MCF 10A (cell line): ENCODE measurements at regions of chr5 and their contacts with region 1.

Region 1: DNA sequence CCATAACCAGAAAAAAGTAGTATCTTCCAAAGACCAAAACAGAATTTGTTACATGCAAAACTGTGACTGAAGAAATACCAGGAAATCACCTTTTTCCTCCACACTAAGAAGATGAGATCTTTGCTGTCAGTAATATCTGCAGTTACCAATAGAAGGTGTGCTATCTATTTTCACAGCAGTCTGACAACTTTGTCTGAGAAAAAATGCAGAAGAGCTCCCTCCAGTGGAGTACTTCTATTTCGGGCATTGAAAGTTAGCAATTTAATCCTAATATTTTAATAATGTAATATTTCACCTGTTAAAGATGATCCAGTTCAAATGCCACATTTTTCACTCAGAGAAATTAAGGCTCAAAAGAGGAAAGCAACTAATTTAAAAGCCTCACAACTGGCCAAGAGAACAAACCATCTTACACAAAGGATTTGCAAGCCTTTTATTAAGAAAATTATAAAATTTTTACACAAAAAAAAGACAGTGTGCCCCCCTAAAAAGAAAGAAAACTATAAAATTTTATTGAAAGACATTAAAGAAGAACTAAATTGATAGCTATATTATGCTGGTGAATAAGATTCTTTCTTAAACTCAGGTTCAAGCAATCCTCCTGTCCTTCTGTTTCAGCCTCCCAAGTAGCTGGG is 50.6 kb downstream of the DEPDC1B start:
- DNase-seq: peak; percentile 63
- H3K4me3 Mint-ChIP-seq: no peak overlapping the region
- H3K27ac Mint-ChIP-seq: no peak overlapping the region
- H3K4me1 Mint-ChIP-seq: peaks cover 22% of the 10 kb centered on the region
- H3K27me3 Mint-ChIP-seq: no peaks in the 10 kb centered on the region
- CTCF ChIP-seq: peak; percentile 49

Region 2: GRCh38 chr5:60196382-60197113 is 452.9 kb before region 1 on chr5:
- CTCF ChIA-PET with region 1: no interaction called
- POLR2A ChIA-PET with region 1: no interaction called
- intact Hi-C with region 1: loop called (anchors 10 kb)
- DNase-seq: peak; percentile 97
- H3K4me3 Mint-ChIP-seq: no peak overlapping the region
- H3K27ac Mint-ChIP-seq: no peak overlapping the region
- H3K4me1 Mint-ChIP-seq: peaks cover 10% of the 10 kb centered on the region
- H3K27me3 Mint-ChIP-seq: peaks cover 43% of the 10 kb centered on the region
- CTCF ChIP-seq: no peak

Region 3: DNA sequence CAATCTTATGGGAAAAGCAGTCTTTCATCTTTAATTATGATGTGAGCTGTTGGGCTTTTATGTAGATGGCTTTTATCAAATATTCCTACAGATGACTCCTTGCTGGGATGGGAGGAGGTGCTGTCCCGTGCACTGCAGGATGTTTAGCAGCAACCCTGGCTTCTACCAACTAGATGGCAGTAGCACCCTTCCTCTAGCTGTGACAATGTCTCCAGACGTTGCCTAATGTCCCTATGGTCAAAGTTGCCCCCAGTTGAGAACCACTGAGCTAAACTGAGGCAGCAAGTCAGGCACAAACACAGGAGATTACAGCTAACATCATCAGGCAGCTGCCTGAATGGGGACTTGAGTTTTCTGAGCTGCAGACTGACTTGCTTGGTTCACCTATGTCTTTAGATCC is 354.0 kb before region 1 on chr5:
- CTCF ChIA-PET with region 1: no interaction called
- POLR2A ChIA-PET with region 1: no interaction called
- intact Hi-C with region 1: loop called (anchors 1 kb)
- DNase-seq: peak; percentile 35
- H3K4me3 Mint-ChIP-seq: no peak overlapping the region
- H3K27ac Mint-ChIP-seq: no peak overlapping the region
- H3K4me1 Mint-ChIP-seq: no peaks in the 10 kb centered on the region
- H3K27me3 Mint-ChIP-seq: peaks cover 90% of the 10 kb centered on the region
- CTCF ChIP-seq: peak; percentile 48

Region 4: GRCh38 chr5:60382716-60383115 is 266.7 kb before region 1 on chr5:
- CTCF ChIA-PET with region 1: no interaction called
- POLR2A ChIA-PET with region 1: no interaction called
- intact Hi-C with region 1: loop called (anchors 1 kb)
- DNase-seq: peak; percentile 35
- H3K4me3 Mint-ChIP-seq: no peak overlapping the region
- H3K27ac Mint-ChIP-seq: no peak overlapping the region
- H3K4me1 Mint-ChIP-seq: no peaks in the 10 kb centered on the region
- H3K27me3 Mint-ChIP-seq: peaks cover 85% of the 10 kb centered on the region
- CTCF ChIP-seq: peak; percentile 34

Region 5: GRCh38 chr5:60660038-60660437 is 10.6 kb after region 1 on chr5:
- CTCF ChIA-PET with region 1: interaction called, 12 read pairs
- POLR2A ChIA-PET with region 1: no interaction called
- intact Hi-C with region 1: no loop called
- DNase-seq: no peak
- H3K4me3 Mint-ChIP-seq: no peak overlapping the region
- H3K27ac Mint-ChIP-seq: no peak overlapping the region
- H3K4me1 Mint-ChIP-seq: no peaks in the 10 kb centered on the region
- H3K27me3 Mint-ChIP-seq: no peaks in the 10 kb centered on the region
- CTCF ChIP-seq: no peak

Region 6: DNA sequence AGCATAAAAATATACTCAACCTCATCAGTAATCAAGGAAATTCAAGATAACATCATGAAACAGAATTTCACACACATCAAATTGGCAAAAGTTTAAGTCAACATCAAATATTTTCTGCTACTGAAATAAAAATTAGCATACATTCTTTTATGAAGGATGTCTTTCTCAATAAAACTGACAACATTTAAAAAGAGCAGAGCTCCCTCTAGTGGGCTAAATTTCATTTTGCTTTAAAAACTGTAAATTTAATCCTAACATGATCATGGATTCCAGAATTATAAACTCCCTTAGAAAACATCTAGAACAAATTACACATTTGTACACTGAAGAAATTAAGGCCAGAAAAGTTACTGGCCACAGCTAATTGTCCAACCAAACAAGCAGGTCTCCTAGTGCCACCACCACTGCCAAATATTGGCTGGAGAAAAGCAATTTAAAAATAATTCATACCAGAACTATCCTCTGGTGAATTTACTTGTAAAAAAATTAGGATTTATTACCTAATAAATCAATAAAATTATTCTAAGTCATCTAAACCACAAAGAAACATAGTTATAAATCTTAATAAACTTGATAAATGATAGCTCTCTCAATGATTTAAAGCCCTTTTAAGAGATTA is 19.4 kb after region 1 on chr5:
- CTCF ChIA-PET with region 1: interaction called, 16 read pairs
- POLR2A ChIA-PET with region 1: no interaction called
- intact Hi-C with region 1: no loop called
- DNase-seq: peak; percentile 58
- H3K4me3 Mint-ChIP-seq: no peak overlapping the region
- H3K27ac Mint-ChIP-seq: no peak overlapping the region
- H3K4me1 Mint-ChIP-seq: no peaks in the 10 kb centered on the region
- H3K27me3 Mint-ChIP-seq: no peaks in the 10 kb centered on the region
- CTCF ChIP-seq: peak; percentile 19